WTC11 (cell line): ENCODE measurements at regions of chr12 and their contacts with region 1.

Region 1: GRCh38 chr12:116708826-116709756 is 28.8 kb downstream of the SPRING1 start:
- DNase-seq: no peak
- ATAC-seq: peak; percentile 73
- H3K4me3 Mint-ChIP-seq: no peak overlapping the region
- H3K27ac Mint-ChIP-seq: no peak overlapping the region
- H3K4me1 Mint-ChIP-seq: peaks cover 8% of the 10 kb centered on the region; the same call in 1 of the 2 replicates
- H3K27me3 Mint-ChIP-seq: peaks cover 7% of the 10 kb centered on the region
- CTCF ChIP-seq: no peak

Region 2: DNA sequence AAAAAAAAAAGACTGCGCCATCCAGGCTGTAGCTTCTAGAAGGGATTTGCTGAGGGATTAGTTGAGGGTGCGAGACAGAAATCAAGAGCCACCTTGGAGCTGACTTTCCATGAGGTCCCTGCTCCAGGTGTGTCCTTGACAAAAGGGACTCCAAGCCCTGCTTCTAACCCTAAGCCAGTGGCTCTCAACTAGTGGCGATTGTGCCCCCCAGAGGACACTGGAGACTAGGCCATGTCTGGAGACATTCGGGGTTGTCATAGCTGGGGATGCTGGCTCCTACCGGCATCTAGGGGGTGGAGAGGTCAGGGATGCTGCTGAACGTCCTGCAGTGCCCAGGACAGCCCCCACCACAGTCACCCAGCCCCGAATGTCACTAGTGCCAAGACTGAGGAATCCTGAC is 11.8 kb before region 1 on chr12:
- CTCF ChIA-PET with region 1: interaction called, 11 read pairs
- POLR2A ChIA-PET with region 1: no interaction called
- DNase-seq: peak; percentile 72
- ATAC-seq: peak; percentile 89
- H3K4me3 Mint-ChIP-seq: no peak overlapping the region
- H3K27ac Mint-ChIP-seq: no peak overlapping the region
- H3K4me1 Mint-ChIP-seq: peaks cover 18% of the 10 kb centered on the region
- H3K27me3 Mint-ChIP-seq: peaks cover 17% of the 10 kb centered on the region
- CTCF ChIP-seq: no peak